Breast epithelium (tissue), 4 donors: ENCODE measurements at regions of chr9 and their contacts with region 1.

Region 1: GRCh38 chr9:16103620-16104397 is 551.0 kb downstream of the CCDC171 start:
- DNase-seq: peak in 1 of 2 donors; percentile 18
- H3K4me3 ChIP-seq: no peak overlapping the region
- H3K27ac ChIP-seq: peak overlapping the region in 1 of 2 donors; percentile 61
- H3K4me1 ChIP-seq: no peaks in the 10 kb centered on the region
- H3K27me3 ChIP-seq: no peaks in the 10 kb centered on the region
- CTCF ChIP-seq: no peak
- POLR2A ChIP-seq: no peak

Region 2: GRCh38 chr9:14741369-14741768 is 1362.4 kb before region 1 on chr9:
- intact Hi-C with region 1: no loop called
- DNase-seq: no peak
- H3K4me3 ChIP-seq: no peak overlapping the region
- H3K27ac ChIP-seq: no peak overlapping the region
- H3K4me1 ChIP-seq: no peaks in the 10 kb centered on the region
- H3K27me3 ChIP-seq: no peaks in the 10 kb centered on the region
- CTCF ChIP-seq: no peak
- POLR2A ChIP-seq: no peak

Region 3: DNA sequence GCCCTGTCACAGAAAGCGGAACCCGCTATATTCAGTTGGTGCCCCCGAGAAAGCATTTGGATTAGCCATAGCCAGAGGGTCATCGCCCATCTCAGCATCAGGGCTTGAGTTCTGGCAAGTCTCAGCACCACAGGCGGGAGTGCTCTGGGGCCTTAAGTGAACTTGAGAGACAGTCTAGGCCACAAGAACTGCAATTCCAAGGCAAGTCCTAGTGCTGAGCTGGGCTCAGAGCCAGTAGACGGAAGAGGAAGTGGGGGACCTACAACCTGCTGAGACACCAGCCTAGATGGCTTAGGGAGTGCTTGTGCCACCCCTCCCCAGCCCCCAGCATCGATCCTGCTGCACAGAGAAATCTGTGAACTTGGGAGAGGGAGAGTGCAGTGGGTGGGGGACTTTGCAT is 43.9 kb after region 1 on chr9:
- intact Hi-C with region 1: loop called (anchors 1 kb)
- DNase-seq: no peak
- H3K4me3 ChIP-seq: no peak overlapping the region
- H3K27ac ChIP-seq: no peak overlapping the region
- H3K4me1 ChIP-seq: no peaks in the 10 kb centered on the region
- H3K27me3 ChIP-seq: no peaks in the 10 kb centered on the region
- CTCF ChIP-seq: no peak
- POLR2A ChIP-seq: no peak